HEK293 (cell line): ENCODE measurements at regions of chr12 and their contacts with region 1.

Region 1: GRCh38 chr12:2890388-2891239 is at the start of gene TULP3:
- H3K4me3 ChIP-seq: peak within 1 kb of the TSS; percentile 93
- H3K27ac ChIP-seq: peak within 1 kb of the TSS; percentile 75
- H3K4me1 ChIP-seq: peaks cover 5% of the 10 kb centered on the region
- CTCF ChIP-seq: peak; percentile 27

Region 2: GRCh38 chr12:2877047-2877952 is 13.3 kb before region 1 on chr12 and contains the starts of genes FOXM1 and RHNO1:
- CTCF ChIA-PET with region 1: interaction called, 5 read pairs
- POLR2A ChIA-PET with region 1: interaction called, 27 read pairs
- H3K4me3 ChIP-seq: peak within 1 kb of the TSS; percentile 95
- H3K27ac ChIP-seq: peak within 1 kb of the TSS; percentile 94
- H3K4me1 ChIP-seq: peaks cover 13% of the 10 kb centered on the region
- CTCF ChIP-seq: no peak; the same call in none of the 2 replicates